Activated CD4-positive, alpha-beta T cell treated with anti-CD3 and anti-CD28 coated beads for 36 hours (primary cell): ENCODE measurements at regions of chr2 and their contacts with region 1.

Region 1: GRCh38 chr2:29115797-29116781 is 874 bp downstream of the CLIP4 start:
- DNase-seq: peak; percentile 88
- ATAC-seq: peak; percentile 74
- H3K4me3 Mint-ChIP-seq: peak overlapping the region; percentile 90
- H3K27ac Mint-ChIP-seq: peak overlapping the region; percentile 96
- H3K4me1 Mint-ChIP-seq: peaks cover 43% of the 10 kb centered on the region
- H3K27me3 Mint-ChIP-seq: peaks cover 5% of the 10 kb centered on the region

Region 2: DNA sequence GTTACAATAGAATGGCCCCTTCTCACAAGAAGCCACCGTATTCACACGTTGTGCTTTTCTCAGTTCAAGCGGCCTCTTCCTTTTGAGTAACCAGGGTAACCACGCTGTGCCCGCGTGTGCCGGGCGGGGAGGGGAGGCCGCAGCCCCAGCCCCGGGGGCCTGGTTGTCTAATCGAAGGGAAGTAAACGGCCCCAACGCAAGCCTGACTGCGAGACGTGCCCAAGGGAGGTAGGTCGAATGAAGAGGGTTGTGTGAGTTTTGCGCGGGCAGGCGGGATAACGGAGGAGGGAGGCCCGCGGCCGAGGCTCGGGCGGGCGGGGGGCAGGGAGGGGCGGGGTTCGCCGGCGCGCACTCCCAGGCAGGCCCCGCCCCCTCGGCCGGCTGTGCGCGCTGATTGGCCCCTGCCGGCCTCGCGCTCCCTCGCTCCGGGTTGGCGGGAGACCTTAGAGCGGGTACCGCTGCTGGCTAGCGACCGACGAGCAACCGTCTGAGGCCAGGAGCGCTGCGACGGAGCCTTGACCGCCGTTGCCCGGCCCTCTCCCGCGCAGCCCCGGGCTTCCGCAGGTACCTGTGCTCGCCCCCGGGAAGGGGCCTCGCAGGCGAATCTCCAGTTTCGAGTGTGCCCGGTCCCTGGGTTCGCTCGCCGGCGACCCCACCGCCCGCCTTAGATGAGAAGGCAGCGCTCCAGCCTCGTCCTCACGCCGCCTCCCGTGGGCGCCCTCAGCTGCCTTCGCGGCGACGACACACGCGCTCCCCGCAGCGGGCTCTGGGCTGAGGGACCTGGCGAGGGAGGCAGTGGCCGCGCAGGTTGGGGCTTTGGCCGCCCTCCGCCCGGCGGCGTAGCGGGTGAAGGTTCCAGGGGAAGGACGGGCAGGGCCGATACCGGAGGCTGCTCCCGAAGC is 305.5 kb before region 1 on chr2 and contains the start of gene SPDYA:
- CTCF ChIA-PET with region 1: interaction called, 3 read pairs
- POLR2A ChIA-PET with region 1: no interaction called
- intact Hi-C with region 1: loop called in 1 of 2 experiments (anchors 5 kb)
- DNase-seq: peak; percentile 90
- ATAC-seq: peak; percentile 95
- H3K4me3 Mint-ChIP-seq: peak within 1 kb of the TSS; percentile 59
- H3K27ac Mint-ChIP-seq: no peak within 1 kb of the TSS
- H3K4me1 Mint-ChIP-seq: peaks cover 14% of the 10 kb centered on the region
- H3K27me3 Mint-ChIP-seq: no peaks in the 10 kb centered on the region
- total RNA-seq, gene SPDYA: 0.93 to 1.2 TPM

Region 3: GRCh38 chr2:28870146-28870891 is 245.8 kb before region 1 on chr2 and contains the start of gene TRMT61B:
- CTCF ChIA-PET with region 1: no interaction called
- POLR2A ChIA-PET with region 1: no interaction called
- intact Hi-C with region 1: loop called in 1 of 2 experiments (anchors 1 kb)
- DNase-seq: peak; percentile 98
- ATAC-seq: peak; percentile 99
- H3K4me3 Mint-ChIP-seq: peak within 1 kb of the TSS; percentile 94
- H3K27ac Mint-ChIP-seq: peak within 1 kb of the TSS; percentile 97
- H3K4me1 Mint-ChIP-seq: peaks cover 25% of the 10 kb centered on the region
- H3K27me3 Mint-ChIP-seq: no peaks in the 10 kb centered on the region
- total RNA-seq, gene TRMT61B: 22.0 to 22.2 TPM

Region 4: DNA sequence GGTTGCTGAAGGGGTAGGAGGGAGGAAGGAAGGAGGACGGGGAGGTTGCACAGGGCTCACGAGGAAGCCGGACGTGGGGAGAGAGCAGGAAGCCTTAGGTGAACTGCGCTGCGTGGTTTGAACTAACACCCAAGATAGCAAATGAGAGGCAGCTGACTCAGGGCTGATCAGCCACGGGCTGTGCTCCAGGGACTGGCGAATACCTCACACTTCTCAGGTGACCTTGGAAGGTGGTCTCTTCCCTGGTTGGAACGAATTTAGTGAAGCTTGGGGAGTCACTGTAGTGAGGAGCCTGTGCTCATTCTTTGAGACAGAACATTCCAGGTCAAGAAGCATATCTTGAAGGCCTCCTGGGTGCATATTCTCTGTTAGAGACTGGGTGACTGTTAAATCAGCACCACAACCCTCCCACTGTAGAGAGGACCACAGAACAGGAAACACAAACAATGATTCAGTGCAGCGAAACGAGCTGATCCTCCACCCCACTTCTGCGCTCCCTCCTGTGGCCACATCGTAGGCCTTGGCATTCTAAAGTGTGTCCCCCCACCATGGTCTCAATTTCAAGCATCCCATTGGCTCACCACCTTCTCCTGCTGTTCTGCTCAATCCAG is 101.2 kb before region 1 on chr2:
- CTCF ChIA-PET with region 1: interaction called, 6 read pairs
- POLR2A ChIA-PET with region 1: no interaction called
- intact Hi-C with region 1: loop called (anchors 2 to 5 kb)
- DNase-seq: peak; percentile 80
- ATAC-seq: peak; percentile 82
- H3K4me3 Mint-ChIP-seq: peak overlapping the region; percentile 75
- H3K27ac Mint-ChIP-seq: peak overlapping the region; percentile 94
- H3K4me1 Mint-ChIP-seq: peaks cover 78% of the 10 kb centered on the region
- H3K27me3 Mint-ChIP-seq: no peaks in the 10 kb centered on the region

Region 5: DNA sequence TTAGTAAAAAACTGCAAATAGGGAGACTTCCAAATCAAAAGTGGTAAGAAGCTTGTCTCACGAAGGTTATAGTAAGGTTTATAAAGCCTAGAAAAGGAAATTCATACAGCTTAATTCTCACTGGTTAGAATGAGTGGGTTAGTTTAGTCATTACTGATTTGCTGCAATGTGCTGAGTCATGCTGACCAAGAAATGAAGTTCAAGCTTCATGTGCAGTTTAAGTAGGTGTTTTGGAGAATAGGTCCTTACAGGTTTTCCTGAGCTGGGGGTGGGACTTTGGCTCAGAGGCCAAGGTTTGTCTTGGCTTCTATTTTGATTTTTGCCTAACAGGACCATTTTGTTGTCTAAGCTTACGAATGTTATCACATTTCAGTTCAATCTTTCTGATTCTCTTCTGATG is 14.2 kb after region 1 on chr2:
- CTCF ChIA-PET with region 1: interaction called, 16 read pairs
- POLR2A ChIA-PET with region 1: interaction called, 9 read pairs
- intact Hi-C with region 1: loop called (anchors 1 to 2 kb)
- DNase-seq: peak; percentile 56
- ATAC-seq: peak; percentile 97
- H3K4me3 Mint-ChIP-seq: peak overlapping the region; percentile 21
- H3K27ac Mint-ChIP-seq: peak overlapping the region; percentile 25
- H3K4me1 Mint-ChIP-seq: peaks cover 34% of the 10 kb centered on the region
- H3K27me3 Mint-ChIP-seq: no peaks in the 10 kb centered on the region